PC-9 (cell line): ENCODE measurements at regions of chr1 and their contacts with region 1.

Region 1: GRCh38 chr1:34852677-34853217 is 6.8 kb downstream of the SMIM12 start:
- DNase-seq: peak; percentile 84 to 88
- H3K4me3 ChIP-seq: no peak overlapping the region
- H3K27ac ChIP-seq: no peak overlapping the region
- H3K4me1 ChIP-seq: peaks cover 4% of the 10 kb centered on the region
- H3K27me3 ChIP-seq: no peaks in the 10 kb centered on the region
- CTCF ChIP-seq: peak; percentile 97

Region 2: DNA sequence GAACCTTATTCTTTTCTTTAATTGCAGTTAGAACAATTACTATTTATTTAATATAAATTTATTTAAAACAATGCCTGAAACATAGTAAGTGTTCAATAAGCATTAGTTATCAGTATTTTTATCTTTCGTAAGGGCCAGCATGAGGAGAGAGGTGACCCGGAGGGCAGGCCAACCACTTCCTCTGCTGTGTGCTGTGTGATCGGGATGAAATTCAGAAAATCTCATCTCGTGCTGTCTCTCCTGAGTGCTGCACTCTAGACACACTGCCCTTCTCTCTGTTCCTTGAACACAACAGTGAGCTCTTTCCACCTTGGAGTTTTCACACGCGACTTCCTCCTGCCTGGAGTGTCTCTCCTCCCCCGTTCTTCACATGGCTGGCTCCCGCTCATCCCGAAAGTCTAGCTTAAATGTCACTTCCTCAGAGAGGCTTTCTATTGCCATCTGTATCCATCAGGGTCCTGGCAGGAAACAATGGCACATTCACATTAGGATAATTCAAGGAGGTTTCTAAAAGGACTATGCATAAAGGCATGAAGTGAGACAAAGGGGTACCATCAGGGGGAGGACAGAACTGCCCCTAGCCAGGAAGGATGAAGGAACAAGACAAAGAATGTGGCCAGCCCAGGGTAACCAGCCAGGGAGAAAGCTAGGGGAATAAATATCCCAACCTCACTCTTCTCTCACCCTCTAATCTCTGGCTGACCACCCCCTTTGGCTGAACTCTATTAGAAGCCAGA is 240.5 kb before region 1 on chr1:
- CTCF ChIA-PET with region 1: no interaction called
- POLR2A ChIA-PET with region 1: no interaction called
- intact Hi-C with region 1: loop called (anchors 10 kb)
- DNase-seq: no peak
- H3K4me3 ChIP-seq: no peak overlapping the region
- H3K27ac ChIP-seq: no peak overlapping the region
- H3K4me1 ChIP-seq: no peaks in the 10 kb centered on the region
- H3K27me3 ChIP-seq: peaks cover 56% of the 10 kb centered on the region
- CTCF ChIP-seq: no peak

Region 3: DNA sequence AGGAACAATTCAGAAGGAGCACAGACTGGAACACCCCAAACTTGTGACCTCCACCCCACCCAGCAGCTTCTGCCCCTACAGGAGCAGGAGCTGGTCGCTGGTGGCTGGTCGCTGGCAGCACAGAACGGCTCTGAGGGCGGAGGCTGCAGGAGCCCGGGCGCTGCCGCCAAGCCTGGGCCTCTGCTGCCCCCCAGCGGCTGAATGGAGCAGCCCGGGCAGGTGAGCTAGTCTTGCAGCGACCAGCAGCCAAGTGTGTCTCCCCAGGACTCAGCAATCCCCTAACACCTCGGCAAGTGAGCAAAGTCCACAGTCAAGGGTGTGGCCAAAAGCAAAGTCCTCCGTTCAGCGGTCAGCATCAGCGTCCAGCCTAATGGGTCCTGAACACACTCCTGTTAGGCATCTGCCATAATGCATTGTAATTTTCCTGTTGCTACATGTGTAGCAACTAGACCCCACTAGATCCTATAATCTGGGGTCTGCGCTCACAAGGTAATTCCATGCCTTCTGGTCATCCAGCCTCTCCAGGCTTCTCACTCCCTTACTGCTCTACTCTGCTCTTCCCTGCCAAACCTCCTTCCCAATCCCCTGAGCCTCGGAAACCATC is 110.0 kb before region 1 on chr1:
- CTCF ChIA-PET with region 1: interaction called, 4 read pairs
- POLR2A ChIA-PET with region 1: no interaction called
- intact Hi-C with region 1: loop called (anchors 1 kb)
- DNase-seq: peak; percentile 48 to 84
- H3K4me3 ChIP-seq: no peak overlapping the region
- H3K27ac ChIP-seq: no peak overlapping the region
- H3K4me1 ChIP-seq: no peaks in the 10 kb centered on the region
- H3K27me3 ChIP-seq: no peaks in the 10 kb centered on the region
- CTCF ChIP-seq: peak; percentile 92

Region 4: GRCh38 chr1:34786521-34787325 is 66.0 kb before region 1 on chr1:
- CTCF ChIA-PET with region 1: interaction called, 10 read pairs
- POLR2A ChIA-PET with region 1: no interaction called
- intact Hi-C with region 1: loop called (anchors 1 kb)
- DNase-seq: peak; percentile 55 to 61
- H3K4me3 ChIP-seq: no peak overlapping the region
- H3K27ac ChIP-seq: no peak overlapping the region
- H3K4me1 ChIP-seq: peaks cover 24% of the 10 kb centered on the region
- H3K27me3 ChIP-seq: no peaks in the 10 kb centered on the region
- CTCF ChIP-seq: peak; percentile 82

Region 5: GRCh38 chr1:35451125-35451528 is 598.4 kb after region 1 on chr1:
- CTCF ChIA-PET with region 1: no interaction called
- POLR2A ChIA-PET with region 1: no interaction called
- intact Hi-C with region 1: no loop called
- DNase-seq: peak; percentile 47 to 72
- H3K4me3 ChIP-seq: no peak overlapping the region
- H3K27ac ChIP-seq: no peak overlapping the region
- H3K4me1 ChIP-seq: peaks cover 19% of the 10 kb centered on the region
- H3K27me3 ChIP-seq: no peaks in the 10 kb centered on the region
- CTCF ChIP-seq: peak; percentile 89

Region 6: GRCh38 chr1:35564037-35564883 is 711.5 kb after region 1 on chr1:
- CTCF ChIA-PET with region 1: no interaction called
- POLR2A ChIA-PET with region 1: no interaction called
- intact Hi-C with region 1: loop called (anchors 1 kb)
- DNase-seq: peak; percentile 69 to 79
- H3K4me3 ChIP-seq: no peak overlapping the region
- H3K27ac ChIP-seq: no peak overlapping the region
- H3K4me1 ChIP-seq: no peaks in the 10 kb centered on the region
- H3K27me3 ChIP-seq: no peaks in the 10 kb centered on the region
- CTCF ChIP-seq: peak; percentile 83

Region 7: DNA sequence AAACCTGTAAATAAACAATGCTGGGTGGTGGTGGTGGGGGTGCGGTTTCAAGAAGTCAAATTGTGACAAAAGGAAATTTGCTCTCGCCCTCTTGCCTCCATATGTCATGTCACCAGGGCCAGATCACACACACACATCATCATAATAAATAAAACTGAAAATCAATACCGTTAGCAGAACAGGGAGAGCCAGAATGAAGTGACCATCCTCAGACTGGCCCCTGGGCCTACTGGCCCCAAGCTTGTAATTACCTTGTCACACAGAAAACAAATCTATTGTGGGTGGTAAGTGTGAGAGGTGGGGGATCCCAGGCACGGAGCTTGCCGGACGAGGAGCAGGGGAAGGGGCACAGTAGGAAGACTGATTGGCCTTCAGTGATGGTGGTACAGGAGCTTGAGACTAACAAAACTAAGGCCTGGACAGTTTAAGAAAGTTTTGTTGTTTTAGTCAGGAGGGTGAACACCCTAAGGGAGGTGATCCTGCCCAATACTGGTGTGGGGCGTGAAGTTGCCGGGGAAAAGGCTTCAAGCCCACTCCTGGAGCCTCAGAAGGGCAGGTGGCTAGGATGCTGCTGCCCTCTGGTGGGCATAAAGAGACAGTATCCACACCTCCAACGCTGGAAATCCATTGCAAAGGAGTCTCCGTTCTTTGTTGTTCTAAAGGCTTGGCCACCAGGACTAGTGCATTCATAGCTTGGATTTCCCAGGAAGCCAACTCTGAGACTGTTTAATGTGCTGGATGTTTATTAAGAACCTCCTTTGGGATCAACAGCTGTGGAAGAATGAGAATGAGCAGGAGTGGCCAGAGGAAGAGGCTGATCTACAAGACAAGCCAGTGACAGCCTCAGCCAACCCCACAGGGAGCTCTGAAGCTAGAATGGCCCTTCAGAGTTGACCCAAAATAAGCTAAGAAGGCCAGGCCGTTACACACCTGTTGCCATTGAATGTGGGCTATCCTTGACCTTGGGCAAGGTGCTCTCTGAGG is 874.0 kb after region 1 on chr1:
- CTCF ChIA-PET with region 1: no interaction called
- POLR2A ChIA-PET with region 1: no interaction called
- intact Hi-C with region 1: loop called (anchors 1 kb)
- DNase-seq: peak; percentile 42 to 46
- H3K4me3 ChIP-seq: no peak overlapping the region
- H3K27ac ChIP-seq: no peak overlapping the region
- H3K4me1 ChIP-seq: no peaks in the 10 kb centered on the region
- H3K27me3 ChIP-seq: no peaks in the 10 kb centered on the region
- CTCF ChIP-seq: peak; percentile 84